ENCODE measurements at regions of chr5 and their contacts with region 1.

Region 1: DNA sequence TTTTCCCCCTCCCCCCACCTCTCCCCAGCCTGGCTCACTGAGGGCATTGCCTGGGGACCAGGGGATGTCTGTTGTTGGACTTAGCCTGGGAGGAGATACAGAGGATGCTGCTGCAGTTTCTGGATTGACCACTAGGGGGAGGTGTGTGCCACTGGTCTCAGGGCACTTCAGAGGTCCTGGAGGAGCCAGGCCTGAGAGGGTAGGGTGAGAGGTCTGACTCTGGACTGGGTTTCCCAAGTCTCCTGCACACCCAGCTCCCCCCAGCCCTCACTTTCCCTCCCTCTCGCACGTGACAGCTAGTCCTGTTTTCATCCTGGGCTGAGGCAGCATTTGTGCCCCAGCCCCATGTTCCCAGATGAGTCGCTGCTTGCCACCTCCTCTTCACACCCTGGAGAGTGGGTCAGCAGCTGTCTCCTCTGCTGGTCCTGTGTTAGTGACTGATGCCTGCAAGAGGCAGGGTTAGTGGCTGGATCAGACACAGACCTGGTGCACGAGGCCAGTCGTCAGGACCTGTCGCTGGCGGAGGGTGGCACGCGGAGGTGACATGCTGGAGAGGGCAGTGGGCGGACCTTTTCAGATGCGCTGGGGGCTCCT is 4.4 kb downstream of the IL3 start:
- DNase-seq: no peak
- H3K4me3 ChIP-seq: no peak overlapping the region
- H3K27me3 ChIP-seq: no peaks in the 10 kb centered on the region
- CTCF ChIP-seq: peak; percentile 98

Region 2: GRCh38 chr5:131417240-131417869 is 647.5 kb before region 1 on chr5:
- CTCF ChIA-PET with region 1: no interaction called
- POLR2A ChIA-PET with region 1: no interaction called
- DNase-seq: peak; percentile 7
- H3K4me3 ChIP-seq: no peak overlapping the region
- H3K27me3 ChIP-seq: no peaks in the 10 kb centered on the region
- CTCF ChIP-seq: peak; percentile 78

Region 3: GRCh38 chr5:131589510-131590348 is 475.1 kb before region 1 on chr5:
- CTCF ChIA-PET with region 1: interaction called, 30 read pairs
- POLR2A ChIA-PET with region 1: no interaction called
- DNase-seq: no peak
- H3K4me3 ChIP-seq: no peak overlapping the region
- H3K27me3 ChIP-seq: no peaks in the 10 kb centered on the region
- CTCF ChIP-seq: peak; percentile 84

Region 4: GRCh38 chr5:132050136-132050535 is 14.7 kb before region 1 on chr5:
- CTCF ChIA-PET with region 1: interaction called, 29 read pairs
- POLR2A ChIA-PET with region 1: no interaction called
- DNase-seq: no peak
- H3K4me3 ChIP-seq: no peak overlapping the region
- H3K27me3 ChIP-seq: peaks cover 8% of the 10 kb centered on the region
- CTCF ChIP-seq: no peak

Region 5: DNA sequence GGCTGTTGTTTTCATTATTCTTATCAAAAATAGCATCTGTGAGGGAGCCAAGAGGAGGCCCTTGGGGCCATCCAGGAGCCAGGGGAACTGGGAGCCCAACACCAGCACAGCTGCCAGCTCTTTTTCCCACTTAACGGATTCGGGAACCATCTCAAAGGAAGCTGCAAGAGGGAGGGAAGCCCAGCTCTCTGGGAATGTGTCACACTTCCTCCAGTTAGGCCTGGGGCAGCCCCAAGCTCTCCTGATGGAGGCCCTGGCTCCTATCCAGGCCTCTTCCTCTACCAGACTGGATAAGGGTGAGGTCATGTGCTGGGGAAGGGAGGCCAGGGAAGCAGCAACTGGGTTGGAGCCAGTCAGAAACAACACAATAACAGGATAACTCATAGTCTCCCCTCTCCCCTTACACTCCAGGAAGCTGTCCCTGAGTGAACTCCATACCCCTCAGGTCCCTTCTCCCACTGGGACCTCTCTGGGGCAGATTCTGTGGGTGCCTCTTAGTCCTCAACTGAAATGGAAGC is 21.5 kb after region 1 on chr5:
- CTCF ChIA-PET with region 1: interaction called, 12 read pairs
- POLR2A ChIA-PET with region 1: interaction called, 3 read pairs
- DNase-seq: peak; percentile 66
- H3K4me3 ChIP-seq: no peak overlapping the region
- H3K27me3 ChIP-seq: no peaks in the 10 kb centered on the region
- CTCF ChIP-seq: no peak

Region 6: DNA sequence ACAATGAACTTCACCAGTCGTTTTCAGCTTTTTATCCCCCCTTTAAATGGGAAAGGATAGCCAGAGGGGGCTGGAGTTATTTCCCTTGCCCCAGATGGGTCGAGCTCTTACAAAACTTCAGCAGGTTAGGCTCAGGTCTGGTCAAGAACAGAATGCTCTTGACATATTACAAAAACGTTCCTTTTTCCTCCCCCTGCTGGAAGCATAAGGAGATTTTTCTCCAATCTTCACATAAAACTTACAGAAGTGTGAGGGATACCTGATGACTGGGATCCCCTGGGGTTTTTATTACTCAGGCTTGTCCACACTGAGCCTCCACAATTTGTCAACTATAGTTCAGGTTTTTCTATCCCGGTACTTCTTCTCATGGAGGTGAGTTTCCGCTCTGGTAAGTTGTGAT is 69.5 kb after region 1 on chr5:
- CTCF ChIA-PET with region 1: interaction called, 21 read pairs
- POLR2A ChIA-PET with region 1: no interaction called
- DNase-seq: no peak
- H3K4me3 ChIP-seq: no peak overlapping the region
- H3K27me3 ChIP-seq: no peaks in the 10 kb centered on the region
- CTCF ChIP-seq: peak; percentile 36; the same call in 1 of the 2 replicates

Region 7: GRCh38 chr5:132180134-132180745 is 115.4 kb after region 1 on chr5:
- CTCF ChIA-PET with region 1: interaction called, 33 read pairs
- POLR2A ChIA-PET with region 1: no interaction called
- DNase-seq: peak; percentile 19
- H3K4me3 ChIP-seq: no peak overlapping the region
- H3K27me3 ChIP-seq: no peaks in the 10 kb centered on the region
- CTCF ChIP-seq: peak; percentile 83

Region 8: DNA sequence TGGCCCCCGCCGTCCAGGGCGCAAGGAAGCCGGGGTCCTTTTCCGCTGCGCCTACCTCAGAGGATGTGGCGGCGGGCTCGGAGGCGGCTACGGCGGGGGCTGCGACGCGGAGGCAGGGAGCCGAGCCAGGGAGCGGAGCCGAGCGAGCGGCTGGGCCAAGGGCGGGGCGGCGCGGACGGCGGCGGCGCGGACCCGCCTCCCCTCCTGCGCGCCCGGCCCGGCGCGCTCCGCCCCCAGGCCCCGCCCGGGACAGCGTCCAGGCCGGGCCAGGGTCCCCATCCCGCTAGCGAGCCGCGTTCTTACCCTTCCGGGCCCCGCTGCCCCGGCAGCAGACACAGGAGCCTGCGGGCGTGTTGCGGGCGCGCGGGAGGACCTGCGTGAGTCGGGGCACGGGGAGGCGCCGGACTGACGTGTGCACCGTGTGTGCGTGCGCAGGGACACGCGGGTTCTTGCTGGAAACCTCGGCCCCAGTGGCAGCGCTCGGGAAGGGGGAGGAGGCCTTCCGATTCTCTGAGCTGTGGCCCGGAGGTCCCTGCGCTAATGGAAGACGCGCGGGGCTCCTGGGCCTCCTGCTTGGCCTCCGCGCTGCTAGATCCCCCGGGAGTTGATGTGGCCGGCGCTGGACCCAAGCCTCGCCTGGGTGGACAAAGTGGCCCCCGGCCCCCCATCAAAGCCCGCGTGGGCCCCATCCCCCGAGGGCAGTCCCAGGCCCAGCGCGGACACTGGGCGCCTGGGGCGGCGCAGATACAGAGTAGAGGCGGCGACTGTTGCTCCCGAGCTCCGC is 1939.9 kb after region 1 on chr5 and contains the start of gene VDAC1:
- CTCF ChIA-PET with region 1: no interaction called
- POLR2A ChIA-PET with region 1: interaction called, 10 read pairs
- DNase-seq: peak; percentile 26
- H3K4me3 ChIP-seq: peak within 1 kb of the TSS; percentile 74
- H3K27me3 ChIP-seq: no peaks in the 10 kb centered on the region
- CTCF ChIP-seq: no peak
- polyA plus RNA-seq, gene VDAC1: 187 and 195 TPM in 2 replicates

Measured in BJ (cell line).